GM12878 (cell line): ENCODE measurements at regions of chr1 and their contacts with region 1.

Region 1: DNA sequence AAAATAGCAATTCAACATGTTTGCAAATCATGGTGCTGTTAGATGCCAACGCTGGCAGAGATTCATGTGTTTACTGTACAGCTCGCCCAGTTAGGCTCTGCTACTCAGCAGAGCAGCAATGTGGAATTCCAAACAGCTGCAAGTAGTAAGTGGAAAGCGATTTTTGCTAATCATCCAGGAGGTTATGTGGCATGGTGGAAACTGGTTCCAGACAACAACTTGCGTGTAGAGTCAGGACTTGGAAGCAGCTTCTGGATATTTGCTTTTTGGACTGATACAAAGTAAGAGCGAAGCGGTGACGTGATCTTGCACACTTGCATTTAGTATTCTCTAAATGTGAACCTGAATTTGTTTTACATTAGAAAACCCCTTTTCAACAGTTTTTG is 27.1 kb upstream of the HHAT start:
- DNase-seq: no peak
- ATAC-seq: no peak
- H3K4me3 ChIP-seq: no peak overlapping the region
- H3K27ac ChIP-seq: no peak overlapping the region
- H3K4me1 ChIP-seq: no peaks in the 10 kb centered on the region
- H3K27me3 ChIP-seq: no peaks in the 10 kb centered on the region; a peak in 1 of 4 replicates
- CTCF ChIP-seq: no peak
- EP300 ChIP-seq: no peak
- POLR2A ChIP-seq: no peak
- RAD21 ChIP-seq: no peak

Region 2: DNA sequence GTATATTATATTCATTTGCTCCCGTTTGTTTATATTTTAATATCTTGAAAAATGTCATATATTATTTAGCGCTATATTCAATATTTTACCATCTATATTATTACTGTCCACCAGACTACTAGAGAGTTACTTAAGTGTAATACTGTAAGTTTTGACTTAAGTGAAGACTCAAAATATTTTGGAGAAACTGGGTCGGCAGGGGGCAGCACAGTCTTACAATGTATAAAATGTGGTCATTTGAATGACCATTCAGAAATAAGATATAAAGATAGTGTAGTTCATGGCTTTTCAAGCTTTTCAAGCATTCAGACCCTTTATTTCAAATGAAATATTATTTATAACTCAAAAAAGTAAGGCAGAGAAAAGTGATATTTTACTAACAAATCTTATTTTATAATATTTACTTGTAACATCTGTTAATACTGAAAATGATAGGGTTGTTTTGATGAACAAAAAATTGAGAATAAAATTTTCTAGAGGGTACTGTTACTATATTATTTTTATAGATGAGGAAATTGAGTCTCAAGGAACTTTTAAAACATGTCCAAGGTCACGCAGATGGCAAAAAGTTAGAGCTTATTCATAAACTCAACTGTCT is 158.0 kb before region 1 on chr1:
- CTCF ChIA-PET with region 1: no interaction called
- POLR2A ChIA-PET with region 1: no interaction called
- RAD21 ChIA-PET with region 1: interaction called, 3 read pairs
- SMC1A ChIA-PET with region 1: interaction called, 15 read pairs
- in situ Hi-C with region 1: no loop called
- intact Hi-C with region 1: no loop called
- DNase-seq: no peak
- ATAC-seq: peak; percentile 61
- H3K4me3 ChIP-seq: no peak overlapping the region
- H3K27ac ChIP-seq: no peak overlapping the region
- H3K4me1 ChIP-seq: no peaks in the 10 kb centered on the region
- H3K27me3 ChIP-seq: no peaks in the 10 kb centered on the region
- CTCF ChIP-seq: peak; percentile 31 to 71 (median 46); a peak in 5 of 6 replicates
- EP300 ChIP-seq: no peak
- POLR2A ChIP-seq: no peak
- RAD21 ChIP-seq: peak; percentile 71